Calu3 (cell line): ENCODE measurements at regions of chr14 and their contacts with region 1.

Region 1: GRCh38 chr14:94392510-94392935 is 4.1 kb upstream of the SERPINA1 start:
- DNase-seq: no peak
- H3K4me3 Mint-ChIP-seq: no peak overlapping the region
- H3K27ac Mint-ChIP-seq: no peak overlapping the region
- H3K4me1 Mint-ChIP-seq: peaks cover 79% of the 10 kb centered on the region
- H3K27me3 Mint-ChIP-seq: no peaks in the 10 kb centered on the region
- CTCF ChIP-seq: no peak

Region 2: GRCh38 chr14:94213021-94213420 is 179.5 kb before region 1 on chr14:
- CTCF ChIA-PET with region 1: no interaction called
- intact Hi-C with region 1: no loop called
- DNase-seq: no peak
- H3K4me3 Mint-ChIP-seq: no peak overlapping the region
- H3K27ac Mint-ChIP-seq: no peak overlapping the region
- H3K4me1 Mint-ChIP-seq: no peaks in the 10 kb centered on the region
- H3K27me3 Mint-ChIP-seq: no peaks in the 10 kb centered on the region
- CTCF ChIP-seq: no peak

Region 3: GRCh38 chr14:94342334-94342934 is 50.1 kb before region 1 on chr14:
- CTCF ChIA-PET with region 1: interaction called, 3 read pairs
- intact Hi-C with region 1: loop called (anchors 5 kb)
- DNase-seq: peak; percentile 88
- H3K4me3 Mint-ChIP-seq: peak overlapping the region; percentile 40
- H3K27ac Mint-ChIP-seq: peak overlapping the region; percentile 77
- H3K4me1 Mint-ChIP-seq: peaks cover 38% of the 10 kb centered on the region
- H3K27me3 Mint-ChIP-seq: no peaks in the 10 kb centered on the region
- CTCF ChIP-seq: no peak

Region 4: DNA sequence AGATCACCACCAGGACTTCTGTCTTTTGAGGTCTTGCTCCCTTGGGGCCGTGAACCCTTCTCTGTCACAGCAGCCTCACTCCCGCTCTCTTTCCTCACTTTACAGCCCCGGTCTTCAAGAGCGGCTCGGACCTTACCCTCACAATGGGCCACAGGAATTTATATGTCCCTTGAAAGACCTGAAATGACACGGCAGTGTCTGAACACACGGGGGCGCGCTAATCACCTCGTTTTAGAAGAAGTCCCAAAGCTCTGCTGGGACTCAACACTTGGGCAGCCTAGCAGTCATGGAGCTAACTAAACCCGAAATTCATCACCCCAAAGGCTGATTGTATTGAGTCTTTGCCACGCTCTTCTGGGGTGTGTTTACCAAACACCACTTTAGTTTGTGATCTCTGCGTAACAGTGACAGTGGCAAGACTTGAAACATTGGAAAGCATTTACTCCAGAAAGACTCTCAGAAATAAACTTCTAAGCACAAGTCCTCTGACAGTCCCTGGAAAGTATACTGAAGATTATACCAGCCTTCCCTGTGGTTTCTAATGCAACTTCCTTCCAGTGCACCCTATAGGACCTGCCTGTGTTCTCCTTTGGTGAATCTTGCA is 31.0 kb after region 1 on chr14:
- CTCF ChIA-PET with region 1: no interaction called
- intact Hi-C with region 1: no loop called
- DNase-seq: peak; percentile 81
- H3K4me3 Mint-ChIP-seq: peak overlapping the region; percentile 32
- H3K27ac Mint-ChIP-seq: no peak overlapping the region
- H3K4me1 Mint-ChIP-seq: peaks cover 8% of the 10 kb centered on the region
- H3K27me3 Mint-ChIP-seq: no peaks in the 10 kb centered on the region
- CTCF ChIP-seq: peak; percentile 56

Region 5: GRCh38 chr14:94439453-94440057 is 47.0 kb after region 1 on chr14:
- CTCF ChIA-PET with region 1: no interaction called
- intact Hi-C with region 1: no loop called
- DNase-seq: no peak
- H3K4me3 Mint-ChIP-seq: no peak overlapping the region
- H3K27ac Mint-ChIP-seq: no peak overlapping the region
- H3K4me1 Mint-ChIP-seq: no peaks in the 10 kb centered on the region
- H3K27me3 Mint-ChIP-seq: peaks cover 57% of the 10 kb centered on the region
- CTCF ChIP-seq: no peak